CD4-positive, alpha-beta memory T cell (primary cell): ENCODE measurements at regions of chr12 and their contacts with region 1.

Region 1: DNA sequence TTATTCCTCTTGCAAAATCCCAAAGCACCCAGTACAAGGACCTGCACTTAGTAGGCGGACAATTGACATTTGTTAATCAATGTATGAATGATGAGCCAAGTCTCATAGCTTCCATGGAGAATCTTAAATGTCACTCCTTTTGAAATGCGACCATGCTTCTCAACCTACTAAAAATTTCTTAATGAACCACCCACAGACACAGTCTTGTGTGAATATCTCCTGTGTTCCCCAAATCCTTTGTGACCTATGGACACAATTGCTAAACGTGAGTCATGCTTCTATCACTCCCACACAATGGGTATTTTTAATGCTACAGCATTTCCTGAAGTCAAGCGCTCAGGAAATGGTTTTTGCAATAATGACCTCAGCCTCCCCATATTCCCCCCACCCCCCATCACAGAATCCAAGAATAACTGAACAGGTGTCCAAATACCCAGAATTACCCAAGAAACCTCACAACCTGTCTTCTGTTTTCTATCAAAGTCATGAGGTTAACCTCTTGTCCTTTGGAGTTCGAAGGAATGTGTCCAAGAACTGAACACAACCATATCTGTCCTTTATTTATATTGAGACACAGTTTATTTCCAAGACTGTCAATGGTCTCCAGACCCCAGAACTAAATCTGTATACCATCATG is 163.6 kb upstream of the PLEKHG7 start:
- DNase-seq: peak in 1 of 5 donors; percentile 11
- H3K4me3 ChIP-seq: no peak overlapping the region
- H3K4me3 Mint-ChIP-seq: peak overlapping the region in 6 of 8 donors; percentile 4 to 87 (median 67)
- H3K27ac ChIP-seq: peak overlapping the region; percentile 27
- H3K27ac Mint-ChIP-seq: peak overlapping the region; percentile 76 to 96 (median 92)
- H3K4me1 ChIP-seq: peaks cover 54% of the 10 kb centered on the region
- H3K4me1 Mint-ChIP-seq: peaks cover 34 to 74% (median 61%) of the 10 kb centered on the region in 4 donors
- H3K27me3 ChIP-seq: no peaks in the 10 kb centered on the region
- H3K27me3 Mint-ChIP-seq: no peaks in the 10 kb centered on the region

Region 2: GRCh38 chr12:92556141-92556540 is 16.9 kb after region 1 on chr12:
- CTCF ChIA-PET with region 1: interaction called, 3 read pairs
- POLR2A ChIA-PET with region 1: interaction called, 16 read pairs
- intact Hi-C with region 1: no loop called
- DNase-seq: peak in 4 of 5 donors; percentile 22 to 34 (median 28)
- H3K4me3 ChIP-seq: peak overlapping the region; percentile 24 to 27
- H3K4me3 Mint-ChIP-seq: peak overlapping the region; percentile 31 to 79 (median 60)
- H3K27ac ChIP-seq: peak overlapping the region; percentile 30
- H3K27ac Mint-ChIP-seq: peak overlapping the region; percentile 49 to 96 (median 81)
- H3K4me1 ChIP-seq: peaks cover 50% of the 10 kb centered on the region
- H3K4me1 Mint-ChIP-seq: peaks cover 25 to 53% (median 40%) of the 10 kb centered on the region in 4 donors
- H3K27me3 ChIP-seq: no peaks in the 10 kb centered on the region
- H3K27me3 Mint-ChIP-seq: no peaks in the 10 kb centered on the region